ENCODE measurements at regions of chr1 and their contacts with region 1.

Region 1: DNA sequence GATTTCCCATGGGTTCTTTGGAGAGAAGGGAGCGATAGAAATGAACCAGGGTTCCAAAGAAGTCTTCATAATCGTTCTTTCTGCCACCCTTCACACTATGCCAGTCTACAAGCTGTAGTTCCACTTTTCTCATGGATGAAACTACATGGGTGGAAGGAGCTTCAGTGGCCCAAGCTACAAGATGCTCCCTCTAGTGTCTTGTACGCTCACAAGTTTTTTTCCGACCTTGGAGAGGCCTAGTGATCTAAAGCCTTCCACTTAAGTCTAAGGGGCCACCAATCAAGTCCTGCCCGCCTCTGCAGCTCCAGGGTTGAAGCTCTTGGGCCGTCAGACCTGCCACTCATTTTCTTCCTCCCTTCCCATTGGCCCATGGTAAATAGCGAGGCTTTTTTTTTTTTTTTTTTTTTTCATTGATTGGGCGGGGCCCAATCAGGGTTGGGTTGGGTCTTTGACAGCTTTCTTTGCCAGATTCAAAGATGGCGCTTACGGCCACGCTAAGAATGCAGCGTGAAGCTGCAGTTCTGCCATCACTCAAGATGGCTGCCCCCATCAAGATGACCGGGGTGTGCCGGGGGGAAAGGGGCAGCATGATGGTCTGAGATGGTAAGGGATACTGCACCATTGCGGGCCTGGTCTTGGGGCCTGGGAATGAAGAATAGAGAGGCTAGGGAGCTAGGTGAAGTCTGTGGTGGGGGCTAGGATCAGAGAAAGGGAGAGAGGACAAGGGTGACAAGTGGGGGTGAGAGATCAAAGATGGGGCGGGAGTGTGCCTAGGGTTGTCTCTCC is at the start of gene TOMM40L:
- DNase-seq: peak; percentile 86 to 96
- H3K4me3 ChIP-seq: peak within 1 kb of the TSS; percentile 75 to 93 (median 83)
- H3K27ac ChIP-seq: no peak within 1 kb of the TSS; the same call in 1 of the 2 replicates
- H3K4me1 ChIP-seq: peaks cover 2 to 6% (median 4%) of the 10 kb centered on the region in 4 experiments
- H3K27me3 ChIP-seq: 0 out of 7 replicates have a peak, but pooled peaks cover 0 to 2% (median 0%) of the 10 kb centered on the region in 4 experiments
- CTCF ChIP-seq: peak in 2 of 3 experiments; percentile 41 to 56; a peak in 3 of 4 replicates
- EP300 ChIP-seq: no peak
- POLR2A ChIP-seq: no peak
- RAD21 ChIP-seq: peak in 1 of 2 experiments; percentile 43; a peak in 2 of 4 replicates
- total RNA-seq, gene TOMM40L: 13.8 and 15.0 TPM in 2 replicates

Region 2: GRCh38 chr1:161082991-161083742 is 142.6 kb before region 1 on chr1:
- CTCF ChIA-PET with region 1: no interaction called
- POLR2A ChIA-PET with region 1: no interaction called
- DNase-seq: no peak
- H3K4me3 ChIP-seq: no peak overlapping the region
- H3K27ac ChIP-seq: no peak overlapping the region
- H3K4me1 ChIP-seq: peaks cover 0 to 6% (median 0%) of the 10 kb centered on the region in 4 experiments; a peak in 4 of 7 replicates
- H3K27me3 ChIP-seq: no peaks in the 10 kb centered on the region
- CTCF ChIP-seq: no peak
- EP300 ChIP-seq: no peak
- POLR2A ChIP-seq: no peak
- RAD21 ChIP-seq: no peak

Region 3: DNA sequence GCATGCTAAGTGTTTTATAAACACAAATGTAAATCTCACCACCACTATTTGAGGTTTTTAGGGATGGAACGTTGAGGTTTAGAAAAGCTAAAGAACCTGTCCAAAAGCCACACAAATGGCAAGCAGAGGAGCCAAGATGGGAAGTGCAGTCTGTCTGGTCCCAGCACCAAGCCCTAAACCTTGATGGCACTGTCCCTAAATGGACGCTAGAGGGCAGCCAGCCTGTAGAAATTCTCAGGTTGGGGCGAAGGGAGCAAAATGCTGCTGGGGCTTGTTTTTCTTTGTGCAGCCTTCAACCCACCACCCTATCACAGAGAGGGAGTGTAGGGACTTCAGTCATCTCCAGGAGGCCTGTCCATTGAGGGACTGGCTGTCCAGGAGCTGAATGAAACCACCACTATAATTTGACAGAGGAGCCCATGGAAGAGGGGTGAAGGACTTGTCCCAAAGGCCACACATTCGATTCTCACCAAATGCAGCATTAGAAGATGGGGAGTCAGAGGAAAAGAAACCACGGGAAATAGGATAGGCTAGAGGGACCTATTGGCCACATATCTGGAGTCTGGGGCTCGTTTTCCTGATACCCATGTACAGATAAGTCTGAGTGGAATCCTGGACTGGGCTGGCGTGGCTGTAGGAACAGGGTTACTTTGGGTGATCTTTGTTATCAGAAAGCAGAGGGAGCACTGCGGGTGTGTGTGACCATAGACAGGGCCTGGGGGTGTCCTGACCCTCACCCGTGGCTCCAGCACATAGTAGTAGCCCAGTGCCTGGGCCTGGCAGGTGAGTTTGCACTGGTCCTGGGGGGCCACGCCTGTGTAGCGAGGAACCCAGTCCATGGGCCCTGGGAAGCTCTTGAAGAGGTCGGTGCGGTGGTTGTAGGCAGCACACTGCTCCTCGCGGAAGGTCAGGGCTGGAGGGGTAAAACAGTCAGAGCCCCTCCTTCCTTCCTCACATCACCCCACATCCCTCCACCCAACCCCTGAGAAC is 33.0 kb before region 1 on chr1:
- CTCF ChIA-PET with region 1: interaction called, 427 read pairs
- POLR2A ChIA-PET with region 1: interaction called, 5 read pairs
- DNase-seq: peak in 1 of 2 experiments; percentile 70
- H3K4me3 ChIP-seq: no peak overlapping the region
- H3K27ac ChIP-seq: no peak overlapping the region
- H3K4me1 ChIP-seq: peaks cover 3 to 12% (median 11%) of the 10 kb centered on the region in 4 experiments
- H3K27me3 ChIP-seq: no peaks in the 10 kb centered on the region; a peak in 1 of 7 replicates
- CTCF ChIP-seq: peak; percentile 83 to 97 (median 83)
- EP300 ChIP-seq: no peak
- POLR2A ChIP-seq: no peak
- RAD21 ChIP-seq: peak; percentile 81 to 84

Region 4: GRCh38 chr1:161250829-161251228 is 25.1 kb after region 1 on chr1:
- CTCF ChIA-PET with region 1: interaction called, 87 read pairs
- POLR2A ChIA-PET with region 1: no interaction called
- DNase-seq: no peak
- H3K4me3 ChIP-seq: no peak overlapping the region
- H3K27ac ChIP-seq: no peak overlapping the region
- H3K4me1 ChIP-seq: no peaks in the 10 kb centered on the region
- H3K27me3 ChIP-seq: no peaks in the 10 kb centered on the region
- CTCF ChIP-seq: no peak
- EP300 ChIP-seq: no peak
- POLR2A ChIP-seq: no peak
- RAD21 ChIP-seq: no peak

Region 5: GRCh38 chr1:161274874-161275273 is 49.1 kb after region 1 on chr1:
- CTCF ChIA-PET with region 1: interaction called, 15 read pairs
- POLR2A ChIA-PET with region 1: no interaction called
- DNase-seq: no peak
- H3K4me3 ChIP-seq: no peak overlapping the region
- H3K27ac ChIP-seq: no peak overlapping the region
- H3K4me1 ChIP-seq: no peaks in the 10 kb centered on the region
- H3K27me3 ChIP-seq: no peaks in the 10 kb centered on the region
- CTCF ChIP-seq: no peak
- EP300 ChIP-seq: no peak
- POLR2A ChIP-seq: no peak
- RAD21 ChIP-seq: no peak

Region 6: GRCh38 chr1:161314201-161314981 is 88.7 kb after region 1 on chr1 and contains the start of gene SDHC:
- CTCF ChIA-PET with region 1: interaction called, 201 read pairs
- POLR2A ChIA-PET with region 1: interaction called, 7 read pairs
- DNase-seq: peak; percentile 68 to 92
- H3K4me3 ChIP-seq: peak within 1 kb of the TSS; percentile 74 to 98 (median 94)
- H3K27ac ChIP-seq: peak within 1 kb of the TSS; percentile 96
- H3K4me1 ChIP-seq: peaks cover 0 to 8% (median 6%) of the 10 kb centered on the region in 4 experiments; a peak in 6 of 7 replicates
- H3K27me3 ChIP-seq: no peaks in the 10 kb centered on the region; a peak in 1 of 7 replicates
- CTCF ChIP-seq: peak; percentile 26 to 53 (median 38)
- EP300 ChIP-seq: peak in 1 of 2 experiments; percentile 56; a peak in 1 of 3 replicates
- POLR2A ChIP-seq: peak; percentile 91 to 99
- RAD21 ChIP-seq: peak in 1 of 2 experiments; percentile 4; a peak in 1 of 4 replicates
- total RNA-seq, gene SDHC: 216 and 224 TPM in 2 replicates

Region 7: DNA sequence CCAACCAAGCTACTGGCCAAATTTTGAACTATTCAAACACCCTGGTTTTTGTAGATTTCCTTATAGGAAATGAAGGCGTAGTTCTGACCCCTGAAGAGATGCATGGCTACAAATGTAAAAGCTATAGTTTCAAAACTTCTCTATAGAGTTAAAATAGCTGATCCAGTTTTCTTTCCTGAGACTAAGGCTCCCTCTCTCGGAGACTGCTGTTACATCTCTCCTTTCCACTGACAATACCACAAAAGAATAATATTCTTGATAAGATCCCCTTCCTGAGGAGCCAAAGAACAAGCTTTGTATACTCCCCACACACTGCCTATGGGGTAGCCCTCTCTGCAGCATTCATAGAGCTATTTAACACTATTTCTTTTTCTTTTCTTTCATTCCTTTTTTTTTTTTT is 148.6 kb after region 1 on chr1:
- CTCF ChIA-PET with region 1: interaction called, 137 read pairs
- POLR2A ChIA-PET with region 1: interaction called, 4 read pairs
- DNase-seq: no peak
- H3K4me3 ChIP-seq: no peak overlapping the region
- H3K27ac ChIP-seq: no peak overlapping the region
- H3K4me1 ChIP-seq: no peaks in the 10 kb centered on the region
- H3K27me3 ChIP-seq: no peaks in the 10 kb centered on the region
- CTCF ChIP-seq: peak in 1 of 3 experiments; percentile 4; a peak in 1 of 4 replicates
- EP300 ChIP-seq: no peak
- POLR2A ChIP-seq: no peak
- RAD21 ChIP-seq: peak; percentile 31 to 37